Heart right ventricle (tissue), 16 donors: ENCODE measurements at regions of chr3 and their contacts with region 1.

Region 1: DNA sequence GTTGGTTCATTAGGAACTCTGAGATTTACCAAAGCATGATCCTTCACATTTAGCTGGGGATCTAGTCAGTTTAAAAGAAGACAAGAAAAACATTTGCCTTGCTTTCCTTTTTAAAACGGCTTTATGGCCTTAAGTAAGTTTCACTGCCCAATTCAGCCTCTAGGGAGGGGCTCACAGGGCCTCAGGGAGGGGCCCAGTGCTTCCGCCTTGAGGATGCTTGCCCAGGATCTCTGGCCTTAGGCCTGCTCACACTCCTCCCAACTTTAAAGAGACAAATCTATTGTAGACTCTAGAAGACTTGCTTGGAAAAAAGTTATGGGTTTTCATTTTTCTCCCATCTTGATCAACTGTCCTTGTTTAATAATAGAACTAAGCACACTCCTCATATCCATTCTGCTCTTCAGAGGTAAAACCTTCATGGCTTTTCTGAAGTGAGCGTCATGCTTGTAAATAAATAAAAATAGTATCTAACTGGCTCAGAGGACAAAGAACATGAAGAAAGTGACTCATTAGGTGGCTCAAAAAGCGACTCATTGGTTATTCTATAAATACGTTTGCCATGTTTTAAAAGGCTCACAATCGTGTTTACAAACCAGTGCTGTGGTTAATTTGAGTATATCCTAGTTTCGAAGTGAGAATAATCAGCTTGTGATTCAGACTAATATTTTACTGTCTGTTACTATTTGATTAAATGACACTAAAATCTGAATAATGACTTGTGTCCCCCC is 13.7 kb downstream of the PDHB start:
- DNase-seq: peak; percentile 45 to 65
- ATAC-seq: peak; percentile 69 to 95 (median 80)
- H3K4me3 ChIP-seq: no peak overlapping the region
- H3K27ac ChIP-seq: peak overlapping the region; percentile 46 to 89 (median 76)
- H3K4me1 ChIP-seq: peaks cover 0 to 52% (median 24%) of the 10 kb centered on the region in 9 donors
- H3K27me3 ChIP-seq: no peaks in the 10 kb centered on the region
- CTCF ChIP-seq: peak in 1 of 9 donors; percentile 17

Region 2: DNA sequence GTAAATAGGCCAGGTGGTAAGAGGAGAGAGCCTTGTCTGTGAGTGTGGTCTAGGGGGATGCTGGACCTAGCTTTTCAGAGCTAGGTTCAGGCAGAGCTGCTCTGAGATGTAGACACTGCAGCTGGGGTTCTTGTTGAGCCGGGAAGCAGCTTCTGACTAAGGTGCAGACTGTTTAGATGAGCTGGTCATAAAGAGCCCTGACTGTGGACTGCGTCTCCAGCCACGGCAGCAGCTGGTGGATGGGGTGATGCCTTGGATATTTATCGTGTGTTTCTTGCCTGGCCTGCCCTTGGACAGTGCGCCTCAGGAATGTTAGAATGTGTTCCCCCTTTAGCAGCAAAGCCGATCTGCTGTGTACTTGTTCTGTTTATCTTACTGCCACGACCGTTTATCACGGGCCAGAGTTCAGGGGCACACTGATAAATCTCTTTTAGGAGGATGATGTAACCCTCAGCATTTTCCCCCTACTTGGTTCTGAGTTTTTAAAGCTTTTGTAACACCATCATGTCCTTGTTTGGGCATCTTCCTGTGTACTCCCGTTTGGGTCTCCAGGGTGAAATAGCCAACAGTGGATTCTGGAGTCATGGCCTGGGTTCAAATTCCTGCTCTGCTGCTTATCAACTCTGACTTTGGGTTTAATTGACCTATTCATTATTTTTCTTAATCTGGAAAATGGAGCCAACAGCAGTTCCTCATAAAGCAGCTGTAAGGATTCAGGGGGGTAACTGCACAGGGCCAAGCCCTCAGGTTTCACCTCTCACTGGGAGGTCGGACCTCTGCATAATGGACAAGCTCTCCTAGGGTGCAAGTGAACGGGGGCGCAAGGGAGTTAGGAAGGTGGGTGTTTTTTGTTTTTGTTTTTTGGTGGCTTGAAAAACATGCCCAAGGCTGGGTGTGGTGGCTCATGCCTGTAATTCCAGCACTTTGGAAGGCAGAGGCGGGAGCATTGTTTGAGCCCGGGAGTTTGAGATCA is 360.3 kb before region 1 on chr3:
- intact Hi-C with region 1: no loop called
- DNase-seq: no peak
- ATAC-seq: peak; percentile 14 to 69 (median 56)
- H3K4me3 ChIP-seq: peak overlapping the region in 1 of 10 donors; percentile 4
- H3K27ac ChIP-seq: peak overlapping the region in 5 of 10 donors; percentile 42 to 80 (median 64)
- H3K4me1 ChIP-seq: peaks cover 0 to 73% (median 44%) of the 10 kb centered on the region in 9 donors
- H3K27me3 ChIP-seq: no peaks in the 10 kb centered on the region
- CTCF ChIP-seq: no peak

Region 3: DNA sequence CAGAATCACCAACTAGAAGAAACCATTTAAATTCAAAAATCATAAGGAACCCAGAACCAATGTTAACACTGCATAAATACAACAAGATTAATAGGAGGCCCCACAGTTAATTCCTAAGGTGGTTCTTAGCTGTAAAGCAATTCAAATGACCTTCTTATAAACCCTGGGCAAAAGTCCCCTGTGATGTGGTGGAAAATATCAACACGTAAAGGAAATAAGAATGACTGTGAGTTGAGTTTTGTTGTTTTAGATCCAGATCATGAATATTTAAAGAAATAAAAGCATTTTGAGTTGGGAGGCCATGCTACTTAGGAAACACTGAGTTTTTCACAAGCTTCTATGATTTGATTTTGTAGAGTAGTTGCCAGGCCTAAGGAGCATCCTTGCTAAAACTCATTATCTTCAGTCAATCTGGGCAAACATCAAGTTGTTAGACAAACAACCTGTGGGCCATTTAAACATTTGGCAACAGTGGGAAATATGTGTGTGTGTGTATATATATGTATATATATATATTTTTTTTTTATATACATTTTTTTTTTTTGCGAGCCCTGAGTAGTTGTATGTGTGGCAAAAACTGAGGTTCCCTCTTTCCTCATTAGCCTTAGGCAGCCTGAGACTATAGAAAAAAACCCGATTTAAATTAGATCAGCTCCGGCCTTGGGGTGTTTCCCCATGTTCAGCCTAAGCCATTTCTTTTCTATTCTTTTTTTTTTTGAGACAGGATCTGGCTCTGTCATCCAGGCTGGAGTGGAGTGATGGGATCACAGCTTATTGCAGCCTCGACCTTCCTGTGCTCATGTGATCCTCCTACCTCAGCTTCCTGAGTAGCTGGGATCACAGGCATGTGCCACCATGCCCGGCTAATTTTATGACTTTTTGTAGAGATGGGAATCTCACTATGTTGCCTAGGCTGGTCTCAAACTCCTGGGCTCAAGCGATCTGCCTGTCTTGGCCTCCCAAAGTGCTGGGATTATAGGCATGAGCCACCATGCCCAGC is 95.3 kb before region 1 on chr3:
- intact Hi-C with region 1: loop called in 4 of 10 experiments (anchors 2 to 10 kb)
- DNase-seq: no peak
- ATAC-seq: no peak
- H3K4me3 ChIP-seq: no peak overlapping the region
- H3K27ac ChIP-seq: peak overlapping the region in 7 of 10 donors; percentile 16 to 72 (median 36)
- H3K4me1 ChIP-seq: peaks cover 0 to 25% (median 14%) of the 10 kb centered on the region in 9 donors
- H3K27me3 ChIP-seq: no peaks in the 10 kb centered on the region
- CTCF ChIP-seq: no peak

Region 4: GRCh38 chr3:58332575-58333188 is 87.3 kb before region 1 on chr3 and contains the start of gene PXK:
- intact Hi-C with region 1: loop called in 3 of 10 experiments (anchors 5 to 10 kb)
- DNase-seq: peak; percentile 78 to 85
- ATAC-seq: peak; percentile 93 to 98 (median 96)
- H3K4me3 ChIP-seq: peak within 1 kb of the TSS; percentile 61 to 95 (median 79)
- H3K27ac ChIP-seq: peak within 1 kb of the TSS in 9 of 10 donors; percentile 43 to 89 (median 70)
- H3K4me1 ChIP-seq: peaks cover 3 to 41% (median 19%) of the 10 kb centered on the region in 9 donors
- H3K27me3 ChIP-seq: no peaks in the 10 kb centered on the region
- CTCF ChIP-seq: peak in 5 of 9 donors; percentile 6 to 42 (median 21)
- total RNA-seq, gene PXK: 7.9 to 16.3 (median 11.7) TPM

Region 5: GRCh38 chr3:58568572-58569286 is 148.8 kb after region 1 on chr3:
- intact Hi-C with region 1: no loop called
- DNase-seq: peak; percentile 74 to 80
- ATAC-seq: peak; percentile 30 to 75 (median 50)
- H3K4me3 ChIP-seq: no peak overlapping the region
- H3K27ac ChIP-seq: peak overlapping the region in 1 of 10 donors; percentile 27
- H3K4me1 ChIP-seq: peaks cover 4 to 42% (median 32%) of the 10 kb centered on the region in 9 donors
- H3K27me3 ChIP-seq: no peaks in the 10 kb centered on the region
- CTCF ChIP-seq: peak; percentile 91 to 96 (median 95)